Caco-2 (cell line): ENCODE measurements at regions of chr7 and their contacts with region 1.

Region 1: GRCh38 chr7:44858161-44858560 is 10.3 kb upstream of the H2AZ2 start:
- DNase-seq: no peak
- H3K4me3 ChIP-seq: no peak overlapping the region
- H3K4me3 Mint-ChIP-seq: no peak overlapping the region
- H3K27ac Mint-ChIP-seq: no peak overlapping the region
- H3K4me1 ChIP-seq: no peaks in the 10 kb centered on the region
- H3K4me1 Mint-ChIP-seq: no peaks in the 10 kb centered on the region
- H3K27me3 ChIP-seq: no peaks in the 10 kb centered on the region
- H3K27me3 Mint-ChIP-seq: no peaks in the 10 kb centered on the region
- CTCF ChIP-seq: peak in 1 of 2 experiments; percentile 39

Region 2: GRCh38 chr7:44885394-44886317 is 27.5 kb after region 1 on chr7 and contains the start of gene PURB:
- CTCF ChIA-PET with region 1: interaction called, 5 read pairs
- POLR2A ChIA-PET with region 1: no interaction called
- intact Hi-C with region 1: loop called (anchors 1 kb)
- DNase-seq: peak; percentile 92 to 95
- H3K4me3 ChIP-seq: peak within 1 kb of the TSS; percentile 78
- H3K4me3 Mint-ChIP-seq: peak within 1 kb of the TSS; percentile 96
- H3K27ac Mint-ChIP-seq: peak within 1 kb of the TSS; percentile 100
- H3K4me1 ChIP-seq: peaks cover 26% of the 10 kb centered on the region
- H3K4me1 Mint-ChIP-seq: peaks cover 17% of the 10 kb centered on the region
- H3K27me3 ChIP-seq: no peaks in the 10 kb centered on the region
- H3K27me3 Mint-ChIP-seq: no peaks in the 10 kb centered on the region
- CTCF ChIP-seq: no peak
- total RNA-seq, gene PURB: 25.1 and 26.3 TPM in 2 replicates

Region 3: GRCh38 chr7:44921607-44922359 is 63.6 kb after region 1 on chr7:
- CTCF ChIA-PET with region 1: no interaction called
- POLR2A ChIA-PET with region 1: no interaction called
- intact Hi-C with region 1: loop called (anchors 1 kb)
- DNase-seq: peak; percentile 65 to 76
- H3K4me3 ChIP-seq: no peak overlapping the region
- H3K4me3 Mint-ChIP-seq: no peak overlapping the region
- H3K27ac Mint-ChIP-seq: no peak overlapping the region
- H3K4me1 ChIP-seq: no peaks in the 10 kb centered on the region
- H3K4me1 Mint-ChIP-seq: no peaks in the 10 kb centered on the region
- H3K27me3 ChIP-seq: no peaks in the 10 kb centered on the region
- H3K27me3 Mint-ChIP-seq: peaks cover 3% of the 10 kb centered on the region
- CTCF ChIP-seq: peak; percentile 49 to 71

Region 4: DNA sequence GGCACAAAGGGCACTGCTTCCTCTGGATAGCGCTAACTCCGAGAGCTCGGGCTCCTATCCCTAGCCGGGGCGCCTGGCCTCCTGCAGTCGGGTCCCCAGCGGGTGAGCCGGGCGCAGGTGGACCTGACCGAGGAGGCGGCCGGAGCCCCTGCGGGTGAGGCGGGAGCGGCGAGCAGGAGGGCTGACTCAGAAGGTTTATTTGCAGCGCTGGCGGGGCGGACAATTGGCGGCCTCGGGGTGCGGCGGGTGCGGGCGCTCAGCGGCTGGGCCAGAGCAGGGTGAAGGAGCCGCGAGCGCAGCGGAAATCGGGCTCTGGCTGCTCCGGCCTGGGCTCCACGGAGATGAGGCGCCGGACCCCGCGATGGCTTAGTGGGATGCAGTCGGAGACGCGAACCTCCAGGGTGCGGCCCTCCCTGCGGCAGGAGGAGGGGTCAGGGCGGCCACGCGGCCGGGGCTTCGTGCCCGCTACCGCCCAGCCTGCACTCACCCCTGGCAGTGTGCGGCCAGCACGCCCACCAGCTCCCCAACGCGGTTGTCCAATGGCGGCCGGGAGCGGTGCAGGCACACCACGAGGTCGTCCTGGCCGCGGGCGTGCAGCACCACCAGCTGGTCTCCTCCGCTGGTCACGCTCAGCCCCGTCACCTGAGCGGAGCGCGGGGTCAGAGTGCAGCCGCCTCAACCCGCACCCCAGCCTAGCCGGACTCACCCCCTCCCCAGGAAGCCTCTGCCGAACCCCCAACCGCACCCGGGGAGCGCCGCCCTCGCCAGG is 104.5 kb after region 1 on chr7:
- CTCF ChIA-PET with region 1: interaction called, 3 read pairs
- POLR2A ChIA-PET with region 1: no interaction called
- intact Hi-C with region 1: loop called (anchors 5 kb)
- DNase-seq: peak; percentile 63 to 67
- H3K4me3 ChIP-seq: peak overlapping the region; percentile 75
- H3K4me3 Mint-ChIP-seq: peak overlapping the region; percentile 68
- H3K27ac Mint-ChIP-seq: no peak overlapping the region
- H3K4me1 ChIP-seq: no peaks in the 10 kb centered on the region
- H3K4me1 Mint-ChIP-seq: no peaks in the 10 kb centered on the region
- H3K27me3 ChIP-seq: no peaks in the 10 kb centered on the region; the same call in 1 of the 2 replicates
- H3K27me3 Mint-ChIP-seq: no peaks in the 10 kb centered on the region
- CTCF ChIP-seq: peak in 1 of 2 experiments; percentile 37

Region 5: GRCh38 chr7:45136106-45137060 is 278.2 kb after region 1 on chr7:
- CTCF ChIA-PET with region 1: interaction called, 10 read pairs
- POLR2A ChIA-PET with region 1: no interaction called
- intact Hi-C with region 1: loop called (anchors 1 kb)
- DNase-seq: peak in 1 of 2 experiments; percentile 68
- H3K4me3 ChIP-seq: no peak overlapping the region
- H3K4me3 Mint-ChIP-seq: no peak overlapping the region
- H3K27ac Mint-ChIP-seq: no peak overlapping the region
- H3K4me1 ChIP-seq: no peaks in the 10 kb centered on the region
- H3K4me1 Mint-ChIP-seq: no peaks in the 10 kb centered on the region
- H3K27me3 ChIP-seq: no peaks in the 10 kb centered on the region
- H3K27me3 Mint-ChIP-seq: peaks cover 13% of the 10 kb centered on the region
- CTCF ChIP-seq: peak; percentile 80 to 88